GM12878 (cell line): ENCODE measurements at regions of chr19 and their contacts with region 1.

Region 1: GRCh38 chr19:14073261-14073924 is 807 bp downstream of the MISP3 start:
- DNase-seq: no peak
- ATAC-seq: peak; percentile 65
- H3K4me3 ChIP-seq: peak overlapping the region; percentile 81
- H3K27ac ChIP-seq: no peak overlapping the region
- H3K4me1 ChIP-seq: peaks cover 19% of the 10 kb centered on the region
- H3K27me3 ChIP-seq: no peaks in the 10 kb centered on the region
- CTCF ChIP-seq: peak; percentile 41 to 70 (median 44); a peak in 5 of 6 replicates
- EP300 ChIP-seq: no peak
- POLR2A ChIP-seq: no peak; the same call in 1 of the 2 replicates
- RAD21 ChIP-seq: 0 out of 2 replicates have a peak, but pooled peaks have one; percentile 13

Region 2: GRCh38 chr19:13597640-13598039 is 475.8 kb before region 1 on chr19:
- CTCF ChIA-PET with region 1: interaction called, 4 read pairs
- POLR2A ChIA-PET with region 1: no interaction called
- RAD21 ChIA-PET with region 1: no interaction called
- SMC1A ChIA-PET with region 1: no interaction called
- in situ Hi-C with region 1: loop called (anchors 10 kb)
- intact Hi-C with region 1: loop called (anchors 5 kb)
- DNase-seq: peak; percentile 25
- ATAC-seq: peak; percentile 93
- H3K4me3 ChIP-seq: no peak overlapping the region
- H3K27ac ChIP-seq: no peak overlapping the region
- H3K4me1 ChIP-seq: no peaks in the 10 kb centered on the region
- H3K27me3 ChIP-seq: no peaks in the 10 kb centered on the region
- CTCF ChIP-seq: peak; percentile 57 to 85 (median 58); a peak in 5 of 6 replicates
- EP300 ChIP-seq: no peak
- POLR2A ChIP-seq: no peak
- RAD21 ChIP-seq: peak; percentile 88

Region 3: DNA sequence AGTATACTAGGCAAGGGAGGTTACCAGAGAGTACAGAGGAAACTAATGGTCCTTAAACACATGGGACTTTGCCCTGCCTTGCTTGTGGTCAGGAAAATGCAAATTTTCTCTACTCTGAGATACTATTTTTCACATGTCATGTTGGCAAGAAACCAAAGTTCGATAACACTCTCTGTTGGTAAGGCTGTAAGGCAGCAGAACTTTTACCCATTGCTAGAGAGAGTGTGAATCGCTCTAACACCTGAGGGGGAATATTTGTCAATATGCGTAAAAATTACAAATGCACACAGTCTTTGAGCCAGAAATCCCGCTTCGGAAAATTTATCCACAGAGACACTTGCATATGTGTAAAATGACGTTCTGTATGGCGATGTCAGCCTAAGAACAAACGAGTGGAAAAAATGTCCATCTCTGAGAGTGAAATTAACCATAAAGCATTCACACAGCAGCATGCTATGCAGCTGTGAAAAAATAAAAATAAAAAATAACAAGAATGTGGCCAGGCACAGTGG is 57.8 kb before region 1 on chr19:
- CTCF ChIA-PET with region 1: interaction called, 10 read pairs
- POLR2A ChIA-PET with region 1: interaction called, 5 read pairs
- RAD21 ChIA-PET with region 1: interaction called, 3 read pairs
- SMC1A ChIA-PET with region 1: no interaction called
- in situ Hi-C with region 1: no loop called
- intact Hi-C with region 1: no loop called
- DNase-seq: peak; percentile 94
- ATAC-seq: peak; percentile 90
- H3K4me3 ChIP-seq: no peak overlapping the region
- H3K27ac ChIP-seq: peak overlapping the region; percentile 83
- H3K4me1 ChIP-seq: peaks cover 27% of the 10 kb centered on the region
- H3K27me3 ChIP-seq: no peaks in the 10 kb centered on the region
- CTCF ChIP-seq: no peak
- EP300 ChIP-seq: peak in 1 of 2 experiments; percentile 56; a peak in 1 of 4 replicates
- POLR2A ChIP-seq: no peak
- RAD21 ChIP-seq: no peak

Region 4: GRCh38 chr19:14039181-14039580 is 34.2 kb before region 1 on chr19:
- CTCF ChIA-PET with region 1: interaction called, 10 read pairs
- POLR2A ChIA-PET with region 1: interaction called, 3 read pairs
- RAD21 ChIA-PET with region 1: no interaction called
- SMC1A ChIA-PET with region 1: interaction called, 7 read pairs
- in situ Hi-C with region 1: no loop called
- intact Hi-C with region 1: no loop called
- DNase-seq: no peak
- ATAC-seq: no peak
- H3K4me3 ChIP-seq: no peak overlapping the region
- H3K27ac ChIP-seq: no peak overlapping the region
- H3K4me1 ChIP-seq: peaks cover 15% of the 10 kb centered on the region
- H3K27me3 ChIP-seq: no peaks in the 10 kb centered on the region
- CTCF ChIP-seq: no peak
- EP300 ChIP-seq: no peak
- POLR2A ChIP-seq: no peak
- RAD21 ChIP-seq: no peak

Region 5: GRCh38 chr19:14059093-14059480 is 14.3 kb before region 1 on chr19:
- CTCF ChIA-PET with region 1: interaction called, 110 read pairs
- POLR2A ChIA-PET with region 1: interaction called, 4 read pairs
- RAD21 ChIA-PET with region 1: interaction called, 12 read pairs
- SMC1A ChIA-PET with region 1: interaction called, 20 read pairs
- in situ Hi-C with region 1: no loop called
- intact Hi-C with region 1: no loop called
- DNase-seq: no peak
- ATAC-seq: peak; percentile 72
- H3K4me3 ChIP-seq: no peak overlapping the region
- H3K27ac ChIP-seq: no peak overlapping the region
- H3K4me1 ChIP-seq: no peaks in the 10 kb centered on the region
- H3K27me3 ChIP-seq: peaks cover 0 to 6% of the 10 kb centered on the region in 2 experiments
- CTCF ChIP-seq: peak; percentile 63 to 87 (median 75)
- EP300 ChIP-seq: no peak
- POLR2A ChIP-seq: no peak
- RAD21 ChIP-seq: peak; percentile 36; the same call in 1 of the 2 replicates

Region 6: GRCh38 chr19:14136509-14137281 is 63.3 kb after region 1 on chr19 and contains the start of gene ASF1B:
- CTCF ChIA-PET with region 1: interaction called, 9 read pairs
- POLR2A ChIA-PET with region 1: interaction called, 6 read pairs
- RAD21 ChIA-PET with region 1: interaction called, 14 read pairs
- SMC1A ChIA-PET with region 1: interaction called, 6 read pairs
- in situ Hi-C with region 1: no loop called
- intact Hi-C with region 1: no loop called
- DNase-seq: peak; percentile 99
- ATAC-seq: peak; percentile 93
- H3K4me3 ChIP-seq: peak within 1 kb of the TSS; percentile 98
- H3K27ac ChIP-seq: peak within 1 kb of the TSS; percentile 79
- H3K4me1 ChIP-seq: 0 out of 2 replicates have a peak, but pooled peaks cover 8% of the 10 kb centered on the region
- H3K27me3 ChIP-seq: no peaks in the 10 kb centered on the region
- CTCF ChIP-seq: peak; percentile 84 to 98 (median 95)
- EP300 ChIP-seq: no peak
- POLR2A ChIP-seq: peak; percentile 98
- RAD21 ChIP-seq: peak; percentile 91
- polyA plus RNA-seq, gene ASF1B: 10.4 to 23.1 TPM